Naive thymus-derived CD4-positive, alpha-beta T cell (primary cell): ENCODE measurements at regions of chr14 and their contacts with region 1.

Region 1: GRCh38 chr14:104826189-104826860 is 25.4 kb downstream of the ZBTB42 start:
- DNase-seq: peak; percentile 84 to 100 (median 93)
- ATAC-seq: peak; percentile 96
- H3K4me3 ChIP-seq: peak overlapping the region; percentile 71
- H3K4me3 Mint-ChIP-seq: peak overlapping the region; percentile 64 to 91 (median 84)
- H3K27ac ChIP-seq: peak overlapping the region; percentile 46
- H3K27ac Mint-ChIP-seq: peak overlapping the region in 4 of 9 donors; percentile 46 to 80 (median 73)
- H3K4me1 ChIP-seq: peaks cover 10 to 12% of the 10 kb centered on the region in 2 donors
- H3K4me1 Mint-ChIP-seq: peaks cover 12 to 26% (median 15%) of the 10 kb centered on the region in 7 donors
- H3K27me3 ChIP-seq: no peaks in the 10 kb centered on the region
- H3K27me3 Mint-ChIP-seq: peaks cover 0 to 33% (median 0%) of the 10 kb centered on the region in 5 donors

Region 2: GRCh38 chr14:104723648-104724406 is 102.5 kb before region 1 on chr14 and contains the start of gene ADSS1:
- CTCF ChIA-PET with region 1: no interaction called
- POLR2A ChIA-PET with region 1: no interaction called
- intact Hi-C with region 1: loop called in 1 of 2 experiments (anchors 1 kb)
- DNase-seq: peak; percentile 39 to 79 (median 68)
- ATAC-seq: peak; percentile 89
- H3K4me3 ChIP-seq: peak within 1 kb of the TSS; percentile 70
- H3K4me3 Mint-ChIP-seq: peak within 1 kb of the TSS; percentile 43 to 80 (median 63)
- H3K27ac ChIP-seq: peak within 1 kb of the TSS; percentile 58
- H3K27ac Mint-ChIP-seq: peak within 1 kb of the TSS in 1 of 9 donors; percentile 22
- H3K4me1 ChIP-seq: peaks cover 0 to 6% of the 10 kb centered on the region in 2 donors
- H3K4me1 Mint-ChIP-seq: peaks cover 0 to 7% (median 0%) of the 10 kb centered on the region in 7 donors
- H3K27me3 ChIP-seq: no peaks in the 10 kb centered on the region
- H3K27me3 Mint-ChIP-seq: no peaks in the 10 kb centered on the region
- total RNA-seq, gene ADSS1: 0.73 to 4.8 (median 4.2) TPM

Region 3: DNA sequence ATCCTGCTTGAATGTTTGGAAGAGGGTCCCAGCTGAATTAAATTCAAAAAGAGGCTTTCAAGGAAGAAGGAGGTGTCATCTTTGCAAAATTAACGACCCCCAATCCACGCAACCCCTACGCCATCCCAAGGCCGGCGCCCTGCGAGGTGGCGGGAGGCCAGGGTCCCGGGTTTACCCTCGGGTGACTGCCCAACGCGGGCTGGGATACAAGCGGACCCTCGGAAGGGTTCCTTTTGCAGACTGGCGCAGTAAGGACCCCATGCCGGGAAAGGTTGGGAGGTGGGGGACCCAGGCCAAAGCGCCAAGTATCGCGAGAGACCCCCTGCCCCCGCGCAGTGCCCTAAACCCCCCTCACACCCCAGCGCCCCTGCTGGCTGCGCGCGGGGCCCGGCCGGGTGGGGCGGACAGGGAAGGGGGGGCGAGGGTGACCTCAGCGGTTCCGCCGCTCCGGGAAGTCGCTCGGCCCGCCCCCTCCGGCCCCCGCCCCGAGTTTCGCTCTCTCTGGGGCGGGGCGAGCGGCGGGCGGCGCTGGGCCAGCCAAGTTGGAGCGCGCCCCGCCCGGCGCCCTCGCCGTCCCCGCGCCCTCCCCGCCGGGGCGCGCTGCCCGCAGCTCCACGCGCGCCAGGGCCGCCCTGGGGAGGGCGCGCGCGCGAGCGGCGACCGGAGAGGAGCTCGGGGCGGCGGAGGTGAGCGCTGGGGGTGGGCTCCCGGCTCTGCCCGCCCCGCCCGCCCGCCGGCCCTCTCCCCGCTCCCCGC is 26.1 kb before region 1 on chr14:
- CTCF ChIA-PET with region 1: interaction called, 4 read pairs
- POLR2A ChIA-PET with region 1: interaction called, 13 read pairs
- intact Hi-C with region 1: loop called (anchors 1 kb)
- DNase-seq: peak in 8 of 9 donors; percentile 55 to 85 (median 68)
- ATAC-seq: peak; percentile 82
- H3K4me3 ChIP-seq: peak overlapping the region; percentile 41
- H3K4me3 Mint-ChIP-seq: peak overlapping the region; percentile 59 to 90 (median 73)
- H3K27ac ChIP-seq: peak overlapping the region; percentile 70
- H3K27ac Mint-ChIP-seq: peak overlapping the region; percentile 32 to 94 (median 88)
- H3K4me1 ChIP-seq: peaks cover 20 to 27% of the 10 kb centered on the region in 2 donors
- H3K4me1 Mint-ChIP-seq: peaks cover 16 to 47% (median 32%) of the 10 kb centered on the region in 7 donors
- H3K27me3 ChIP-seq: no peaks in the 10 kb centered on the region
- H3K27me3 Mint-ChIP-seq: peaks cover 0 to 2% (median 0%) of the 10 kb centered on the region in 5 donors

Region 4: GRCh38 chr14:104865644-104866441 is 39.5 kb after region 1 on chr14:
- CTCF ChIA-PET with region 1: no interaction called
- POLR2A ChIA-PET with region 1: no interaction called
- intact Hi-C with region 1: loop called (anchors 1 kb)
- DNase-seq: peak in 1 of 9 donors; percentile 67
- ATAC-seq: peak; percentile 36
- H3K4me3 ChIP-seq: peak overlapping the region; percentile 24
- H3K4me3 Mint-ChIP-seq: peak overlapping the region in 9 of 10 donors; percentile 16 to 79 (median 69)
- H3K27ac ChIP-seq: peak overlapping the region; percentile 25
- H3K27ac Mint-ChIP-seq: peak overlapping the region in 1 of 9 donors; percentile 18
- H3K4me1 ChIP-seq: no peaks in the 10 kb centered on the region
- H3K4me1 Mint-ChIP-seq: peaks cover 0 to 9% (median 4%) of the 10 kb centered on the region in 7 donors
- H3K27me3 ChIP-seq: no peaks in the 10 kb centered on the region
- H3K27me3 Mint-ChIP-seq: peaks cover 0 to 23% (median 7%) of the 10 kb centered on the region in 5 donors

Region 5: DNA sequence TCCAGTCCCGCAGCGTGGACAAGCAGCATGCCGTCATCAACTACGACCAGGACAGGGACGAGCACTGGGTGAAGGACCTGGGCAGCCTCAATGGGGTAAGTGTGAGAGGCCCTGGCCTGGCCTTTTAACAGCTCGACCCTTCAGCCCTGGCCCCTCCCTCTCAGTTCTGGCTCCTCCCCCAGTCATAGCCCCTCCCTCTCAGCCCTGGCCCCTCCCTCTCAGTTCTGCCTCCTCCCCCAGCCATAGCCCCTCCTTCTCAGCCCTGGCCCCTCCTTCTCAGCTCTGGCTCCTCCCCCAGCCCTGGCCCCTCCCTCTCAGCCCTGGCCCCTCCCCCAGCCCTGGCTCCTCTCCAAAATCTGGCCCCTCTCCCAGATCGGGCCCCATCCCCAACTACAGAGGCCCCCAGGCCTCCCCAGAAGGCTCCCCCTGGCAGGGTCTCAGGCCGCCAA is 50.0 kb after region 1 on chr14:
- CTCF ChIA-PET with region 1: no interaction called
- POLR2A ChIA-PET with region 1: no interaction called
- intact Hi-C with region 1: loop called in 1 of 2 experiments (anchors 1 kb)
- DNase-seq: peak in 3 of 9 donors; percentile 14 to 56 (median 32)
- ATAC-seq: peak; percentile 87
- H3K4me3 ChIP-seq: no peak overlapping the region
- H3K4me3 Mint-ChIP-seq: no peak overlapping the region
- H3K27ac ChIP-seq: no peak overlapping the region
- H3K27ac Mint-ChIP-seq: no peak overlapping the region
- H3K4me1 ChIP-seq: no peaks in the 10 kb centered on the region
- H3K4me1 Mint-ChIP-seq: peaks cover 0 to 8% (median 4%) of the 10 kb centered on the region in 7 donors
- H3K27me3 ChIP-seq: no peaks in the 10 kb centered on the region
- H3K27me3 Mint-ChIP-seq: no peaks in the 10 kb centered on the region